Mammary epithelial cell (primary cell): ENCODE measurements at regions of chr13 and their contacts with region 1.

Region 1: DNA sequence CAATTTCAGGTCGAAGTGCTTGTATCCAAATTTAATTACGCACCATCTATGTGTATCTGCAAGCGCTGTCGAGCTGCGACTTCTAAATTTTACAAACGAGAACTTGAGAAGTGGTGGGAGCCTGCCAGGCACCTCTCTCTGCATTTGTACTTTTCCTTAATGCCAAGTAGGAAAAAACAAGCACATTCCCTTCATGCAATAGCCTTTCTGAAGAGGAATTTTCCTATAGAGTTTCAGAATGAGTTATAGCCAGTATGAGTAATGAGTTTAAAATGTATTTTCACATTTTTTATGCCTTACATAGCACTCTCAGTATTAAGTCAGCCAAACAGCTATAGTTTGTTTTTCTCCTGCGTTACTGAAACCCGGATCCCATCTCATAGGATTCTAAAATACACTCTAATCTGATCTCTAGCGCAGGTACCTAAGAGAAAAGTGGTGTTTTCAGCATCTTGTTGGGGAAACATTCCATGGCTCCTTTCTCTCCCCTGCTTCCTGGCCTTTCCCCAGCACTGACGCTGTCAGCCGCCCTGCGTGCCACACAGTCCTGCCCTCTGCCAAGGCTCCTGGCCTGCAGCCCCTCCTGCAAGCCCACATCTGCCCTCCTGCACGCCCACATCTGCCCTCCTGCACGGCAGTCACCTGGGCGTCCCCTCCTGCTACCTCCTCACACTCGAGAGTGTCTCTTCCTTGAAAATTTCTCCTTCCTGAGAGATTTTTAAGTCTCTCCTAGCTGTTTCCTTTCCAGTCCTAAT is 526.9 kb downstream of the MYO16 start:
- DNase-seq: peak; percentile 84
- H3K4me3 ChIP-seq: peak overlapping the region; percentile 15 to 33 (median 30)
- H3K27ac ChIP-seq: peak overlapping the region; percentile 98
- H3K4me1 ChIP-seq: peaks cover 69% of the 10 kb centered on the region
- H3K27me3 ChIP-seq: no peaks in the 10 kb centered on the region
- CTCF ChIP-seq: no peak

Region 2: DNA sequence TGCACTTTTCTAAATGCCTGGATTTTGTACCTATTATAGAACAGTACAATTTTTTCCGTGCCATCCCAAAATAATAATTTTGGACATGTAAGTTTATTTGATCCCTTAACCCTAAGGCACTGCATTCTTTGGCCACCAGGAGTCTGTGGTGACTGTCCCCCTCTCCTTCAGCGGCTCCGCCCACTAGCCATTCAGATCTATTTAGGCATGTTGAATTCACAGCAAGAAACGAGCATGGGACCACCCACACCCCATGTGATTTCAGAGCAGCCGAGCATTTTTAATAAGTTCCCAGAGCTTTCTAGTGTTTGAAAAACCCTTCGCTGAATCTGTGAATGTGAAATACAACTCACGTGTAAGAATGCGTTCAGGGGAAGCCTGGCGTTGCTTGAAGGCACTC is 40.6 kb after region 1 on chr13:
- CTCF ChIA-PET with region 1: no interaction called
- dilution Hi-C with region 1: loop called (anchors 5 kb)
- in situ Hi-C with region 1: no loop called
- intact Hi-C with region 1: loop called (anchors 5 kb)
- DNase-seq: no peak
- H3K4me3 ChIP-seq: no peak overlapping the region
- H3K27ac ChIP-seq: no peak overlapping the region
- H3K4me1 ChIP-seq: peaks cover 9% of the 10 kb centered on the region
- H3K27me3 ChIP-seq: no peaks in the 10 kb centered on the region
- CTCF ChIP-seq: peak in 1 of 2 donors; percentile 2

Region 3: GRCh38 chr13:109297628-109298027 is 141.3 kb after region 1 on chr13:
- CTCF ChIA-PET with region 1: no interaction called
- dilution Hi-C with region 1: no loop called
- in situ Hi-C with region 1: no loop called
- intact Hi-C with region 1: loop called (anchors 1 kb)
- DNase-seq: peak; percentile 77
- H3K4me3 ChIP-seq: no peak overlapping the region
- H3K27ac ChIP-seq: no peak overlapping the region
- H3K4me1 ChIP-seq: no peaks in the 10 kb centered on the region
- H3K27me3 ChIP-seq: no peaks in the 10 kb centered on the region
- CTCF ChIP-seq: no peak

Region 4: DNA sequence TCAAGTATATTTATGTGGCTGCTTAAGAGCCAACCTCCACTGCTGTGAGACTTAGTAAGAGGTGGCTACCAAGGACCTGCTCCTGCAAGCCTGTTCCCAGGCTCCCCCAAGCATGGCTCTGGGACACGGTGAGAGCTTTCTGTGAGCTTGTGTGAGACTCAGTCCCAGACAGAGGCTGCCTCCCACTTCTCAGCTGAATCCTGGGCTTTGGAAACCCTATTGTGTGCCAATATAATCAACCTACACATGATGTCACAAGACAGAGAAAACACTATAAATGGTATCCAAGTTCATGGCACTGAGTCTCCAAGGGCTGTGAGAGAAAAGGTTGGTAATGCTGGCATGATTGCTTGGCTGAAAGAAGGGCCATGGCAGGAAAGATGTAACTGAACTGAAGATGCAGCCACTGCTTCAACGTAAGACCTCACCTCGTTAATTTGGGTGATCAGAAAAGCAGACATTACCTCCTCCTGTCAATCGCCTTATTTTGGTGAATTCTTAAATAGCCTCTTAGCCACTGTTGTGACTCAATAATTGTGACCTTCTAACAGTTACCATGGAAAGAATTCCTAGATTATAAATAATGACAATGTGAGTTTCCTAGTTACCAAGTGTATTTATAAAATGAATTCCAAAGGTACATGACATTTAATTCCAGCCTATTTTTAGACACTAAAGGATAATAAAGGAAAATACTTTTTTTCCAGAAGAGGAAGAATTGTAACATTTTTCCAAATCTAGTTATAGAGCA is 298.0 kb after region 1 on chr13:
- CTCF ChIA-PET with region 1: no interaction called
- dilution Hi-C with region 1: no loop called
- in situ Hi-C with region 1: no loop called
- intact Hi-C with region 1: no loop called
- DNase-seq: no peak
- H3K4me3 ChIP-seq: no peak overlapping the region
- H3K27ac ChIP-seq: no peak overlapping the region
- H3K4me1 ChIP-seq: no peaks in the 10 kb centered on the region
- H3K27me3 ChIP-seq: no peaks in the 10 kb centered on the region
- CTCF ChIP-seq: no peak